ENCODE measurements at regions of chr7 and their contacts with region 1.

Region 1: GRCh38 chr7:156680281-156680680 is 39.7 kb downstream of the RNF32 start:
- DNase-seq: no peak
- H3K4me3 ChIP-seq: no peak overlapping the region
- H3K27ac ChIP-seq: no peak overlapping the region
- H3K4me1 ChIP-seq: no peaks in the 10 kb centered on the region
- H3K27me3 ChIP-seq: no peaks in the 10 kb centered on the region
- CTCF ChIP-seq: no peak
- POLR2A ChIP-seq: no peak

Region 2: GRCh38 chr7:156722043-156722826 is 42.0 kb after region 1 on chr7:
- intact Hi-C with region 1: no loop called
- DNase-seq: peak in 2 of 7 donors; percentile 34 to 39
- H3K4me3 ChIP-seq: no peak overlapping the region
- H3K27ac ChIP-seq: no peak overlapping the region
- H3K4me1 ChIP-seq: peaks cover 4 to 11% of the 10 kb centered on the region in 2 donors
- H3K27me3 ChIP-seq: no peaks in the 10 kb centered on the region
- CTCF ChIP-seq: peak in 1 of 6 experiments; percentile 11
- POLR2A ChIP-seq: no peak

Region 3: GRCh38 chr7:156751319-156751718 is 71.0 kb after region 1 on chr7:
- intact Hi-C with region 1: loop called in 1 of 2 experiments (anchors 10 kb)
- DNase-seq: peak in 6 of 7 donors; percentile 35 to 68 (median 44)
- H3K4me3 ChIP-seq: no peak overlapping the region
- H3K27ac ChIP-seq: peak overlapping the region in 3 of 5 donors; percentile 46 to 71 (median 60)
- H3K4me1 ChIP-seq: peaks cover 5 to 11% of the 10 kb centered on the region in 2 donors
- H3K27me3 ChIP-seq: no peaks in the 10 kb centered on the region
- CTCF ChIP-seq: no peak
- POLR2A ChIP-seq: peak in 1 of 2 donors; percentile 21

Region 4: DNA sequence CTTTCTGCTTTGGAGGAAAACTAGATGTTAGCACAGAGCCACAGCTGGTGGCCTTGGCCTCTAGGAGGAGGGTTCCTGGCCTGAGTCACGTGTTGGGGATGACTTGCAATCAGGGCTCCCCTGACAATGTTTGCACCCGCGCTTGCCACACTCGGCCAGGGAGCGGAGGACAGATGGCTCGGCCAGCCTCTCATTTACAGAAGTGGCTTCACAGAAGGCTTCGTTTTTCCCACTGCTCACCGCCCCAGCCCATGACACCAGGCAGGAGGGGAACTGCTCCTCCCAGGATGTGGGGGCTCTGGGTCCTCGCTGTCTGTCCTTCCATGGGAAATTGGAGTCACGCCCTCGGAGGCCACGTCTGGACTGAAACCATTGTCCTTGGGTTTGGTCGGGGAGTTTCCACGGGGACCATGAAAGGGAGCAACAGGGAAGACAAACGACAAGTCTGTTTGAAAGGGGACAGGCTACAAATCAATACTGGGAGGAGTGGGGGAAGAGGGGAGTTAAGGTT is 408.9 kb after region 1 on chr7:
- intact Hi-C with region 1: no loop called
- DNase-seq: peak in 1 of 7 donors; percentile 18
- H3K4me3 ChIP-seq: no peak overlapping the region
- H3K27ac ChIP-seq: no peak overlapping the region
- H3K4me1 ChIP-seq: no peaks in the 10 kb centered on the region
- H3K27me3 ChIP-seq: peaks cover 12% of the 10 kb centered on the region
- CTCF ChIP-seq: no peak
- POLR2A ChIP-seq: no peak

Measured in adrenal gland (tissue), 19 donors.